MCF 10A (cell line): ENCODE measurements at regions of chr12 and their contacts with region 1.

Region 1: GRCh38 chr12:52486166-52487105 is 6.6 kb downstream of the KRT6A start:
- DNase-seq: peak; percentile 29
- H3K4me3 Mint-ChIP-seq: peak overlapping the region; percentile 21
- H3K27ac Mint-ChIP-seq: peak overlapping the region; percentile 50
- H3K4me1 Mint-ChIP-seq: peaks cover 19% of the 10 kb centered on the region
- H3K27me3 Mint-ChIP-seq: no peaks in the 10 kb centered on the region
- CTCF ChIP-seq: no peak

Region 2: GRCh38 chr12:52473768-52474167 is 12.7 kb before region 1 on chr12 and contains the start of gene KRT6C:
- CTCF ChIA-PET with region 1: no interaction called
- POLR2A ChIA-PET with region 1: interaction called, 20 read pairs
- intact Hi-C with region 1: no loop called
- DNase-seq: peak; percentile 43
- H3K4me3 Mint-ChIP-seq: no peak within 1 kb of the TSS
- H3K27ac Mint-ChIP-seq: no peak within 1 kb of the TSS
- H3K4me1 Mint-ChIP-seq: no peaks in the 10 kb centered on the region
- H3K27me3 Mint-ChIP-seq: no peaks in the 10 kb centered on the region
- CTCF ChIP-seq: no peak
- total RNA-seq, gene KRT6C: 0.19 and 0.44 TPM in 2 replicates

Region 3: GRCh38 chr12:52579468-52580465 is 93.3 kb after region 1 on chr12:
- CTCF ChIA-PET with region 1: no interaction called
- POLR2A ChIA-PET with region 1: no interaction called
- intact Hi-C with region 1: no loop called
- DNase-seq: peak; percentile 29
- H3K4me3 Mint-ChIP-seq: no peak overlapping the region
- H3K27ac Mint-ChIP-seq: no peak overlapping the region
- H3K4me1 Mint-ChIP-seq: peaks cover 26% of the 10 kb centered on the region
- H3K27me3 Mint-ChIP-seq: no peaks in the 10 kb centered on the region
- CTCF ChIP-seq: no peak

Region 4: DNA sequence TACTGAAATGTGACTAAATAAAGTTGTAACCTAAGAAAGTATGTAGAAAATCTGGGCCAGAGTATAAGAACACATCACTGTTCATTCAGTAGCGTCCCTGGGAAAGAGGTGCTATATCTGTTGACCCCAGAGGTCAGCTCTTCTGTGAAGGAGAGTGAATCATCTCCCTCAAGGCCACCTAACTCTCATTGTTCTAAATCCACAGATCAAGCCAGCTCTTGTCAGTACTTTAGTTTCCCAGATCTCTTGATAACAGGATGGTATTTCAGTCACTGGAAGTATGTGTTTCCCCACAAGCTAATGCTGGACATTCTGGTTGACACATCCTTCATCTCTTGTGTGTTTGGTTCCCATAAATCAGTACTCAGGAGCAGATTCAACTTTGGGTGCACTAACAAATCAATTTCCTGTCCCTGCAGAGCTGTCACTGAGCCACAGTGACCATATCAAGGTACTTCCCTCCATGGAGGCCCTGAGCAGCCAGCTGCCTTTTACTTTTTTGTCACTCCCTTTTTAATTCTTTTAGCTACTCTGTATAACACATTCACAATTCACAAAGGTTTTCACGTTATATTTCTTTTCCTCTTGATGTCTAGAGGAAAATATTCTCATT is 186.0 kb after region 1 on chr12:
- CTCF ChIA-PET with region 1: no interaction called
- POLR2A ChIA-PET with region 1: no interaction called
- intact Hi-C with region 1: no loop called
- DNase-seq: peak; percentile 67
- H3K4me3 Mint-ChIP-seq: no peak overlapping the region
- H3K27ac Mint-ChIP-seq: no peak overlapping the region
- H3K4me1 Mint-ChIP-seq: no peaks in the 10 kb centered on the region
- H3K27me3 Mint-ChIP-seq: peaks cover 44% of the 10 kb centered on the region
- CTCF ChIP-seq: no peak